GM12878 (cell line): ENCODE measurements at regions of chr6 and their contacts with region 1.

Region 1: DNA sequence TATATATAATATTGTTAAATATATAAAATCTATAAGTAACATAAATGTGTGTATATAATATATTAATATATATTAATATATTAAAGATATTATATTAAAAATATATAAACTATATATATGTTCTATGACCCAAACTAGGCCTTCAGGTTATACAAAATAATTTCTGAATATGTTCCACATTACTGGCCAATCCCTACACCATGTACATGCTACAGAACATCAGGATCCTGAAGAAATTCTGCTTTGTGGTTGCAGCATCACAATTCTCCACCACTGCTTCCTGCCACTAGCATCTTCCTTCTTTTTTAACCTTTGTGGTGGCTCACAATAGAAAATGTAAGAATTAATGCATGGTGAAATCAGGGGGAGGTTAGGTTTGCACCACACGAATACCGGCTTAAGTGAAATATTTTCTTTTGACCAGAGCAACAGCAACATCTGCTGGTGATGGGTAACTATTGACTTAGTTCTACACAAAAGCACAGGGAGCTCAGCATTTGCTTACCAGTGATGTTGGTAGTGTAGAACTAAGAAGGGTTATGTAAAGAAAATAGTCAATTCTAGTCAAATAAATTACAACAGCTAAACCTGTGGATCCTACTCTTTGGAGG is 280.6 kb downstream of the SYNE1 start:
- DNase-seq: no peak
- ATAC-seq: peak; percentile 78
- H3K4me3 ChIP-seq: no peak overlapping the region
- H3K27ac ChIP-seq: no peak overlapping the region
- H3K4me1 ChIP-seq: no peaks in the 10 kb centered on the region
- H3K27me3 ChIP-seq: no peaks in the 10 kb centered on the region
- CTCF ChIP-seq: peak; percentile 28 to 53 (median 47); a peak in 4 of 6 replicates
- EP300 ChIP-seq: no peak
- POLR2A ChIP-seq: no peak
- RAD21 ChIP-seq: peak; percentile 67

Region 2: DNA sequence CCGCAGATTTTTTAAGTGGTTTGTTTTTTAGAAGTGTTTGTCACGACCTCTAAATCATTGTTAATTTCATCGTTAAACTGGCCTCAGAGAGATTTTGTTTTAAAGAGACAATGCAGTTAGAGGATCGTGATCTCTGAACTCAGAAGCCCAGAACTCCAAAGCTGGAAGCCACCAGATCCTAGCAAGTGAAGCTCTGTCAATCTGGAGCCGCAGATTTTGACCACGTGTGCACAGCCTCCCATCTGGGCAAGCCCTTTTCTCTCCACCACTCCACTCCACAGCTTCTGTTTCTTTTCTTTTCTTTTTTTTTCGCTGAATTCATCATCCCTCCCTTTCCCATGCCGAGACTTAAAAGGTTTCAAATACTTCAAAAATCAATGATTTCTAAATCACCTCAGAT is 691.2 kb before region 1 on chr6:
- CTCF ChIA-PET with region 1: no interaction called
- POLR2A ChIA-PET with region 1: no interaction called
- RAD21 ChIA-PET with region 1: no interaction called
- SMC1A ChIA-PET with region 1: no interaction called
- in situ Hi-C with region 1: no loop called
- intact Hi-C with region 1: loop called (anchors 5 kb)
- DNase-seq: no peak
- ATAC-seq: no peak
- H3K4me3 ChIP-seq: no peak overlapping the region
- H3K27ac ChIP-seq: no peak overlapping the region
- H3K4me1 ChIP-seq: no peaks in the 10 kb centered on the region
- H3K27me3 ChIP-seq: no peaks in the 10 kb centered on the region; a peak in 3 of 4 replicates
- CTCF ChIP-seq: no peak
- EP300 ChIP-seq: no peak
- POLR2A ChIP-seq: no peak
- RAD21 ChIP-seq: no peak

Region 3: DNA sequence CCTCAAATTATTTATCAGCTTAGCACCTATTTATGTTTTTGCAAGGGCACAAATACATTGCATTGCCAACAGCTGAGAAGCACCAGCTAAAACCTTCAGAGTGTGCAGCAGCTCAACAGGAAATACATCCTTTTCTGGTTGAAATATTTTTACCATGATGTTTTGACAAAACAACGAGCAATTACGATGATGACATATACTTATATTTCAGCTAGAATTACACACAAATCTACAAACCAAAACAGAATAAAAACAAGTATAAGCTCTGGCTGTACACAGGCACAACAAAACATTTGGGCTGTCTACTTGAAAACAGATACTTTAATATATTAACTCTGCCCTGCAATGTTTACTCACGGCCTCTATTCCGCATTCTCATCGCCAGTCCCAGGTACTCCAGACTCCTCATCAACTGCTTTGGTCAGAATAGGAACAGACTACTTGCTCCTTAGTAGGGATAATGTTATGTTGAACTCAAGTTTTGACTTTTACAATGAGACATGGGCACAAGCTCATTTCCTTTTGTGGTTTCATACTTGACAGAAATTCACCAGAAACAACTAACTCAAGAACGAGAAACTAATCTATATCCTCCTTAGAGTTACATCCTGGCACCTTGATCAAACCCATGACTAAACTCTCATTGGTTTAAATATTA is 171.5 kb before region 1 on chr6:
- CTCF ChIA-PET with region 1: no interaction called
- POLR2A ChIA-PET with region 1: no interaction called
- RAD21 ChIA-PET with region 1: no interaction called
- SMC1A ChIA-PET with region 1: no interaction called
- in situ Hi-C with region 1: no loop called
- intact Hi-C with region 1: no loop called
- DNase-seq: peak; percentile 32
- ATAC-seq: peak; percentile 83
- H3K4me3 ChIP-seq: peak overlapping the region; percentile 38; the same call in 1 of the 2 replicates
- H3K27ac ChIP-seq: peak overlapping the region; percentile 55
- H3K4me1 ChIP-seq: peaks cover 6% of the 10 kb centered on the region
- H3K27me3 ChIP-seq: no peaks in the 10 kb centered on the region
- CTCF ChIP-seq: no peak
- EP300 ChIP-seq: no peak
- POLR2A ChIP-seq: no peak
- RAD21 ChIP-seq: no peak